H1 (cell line): ENCODE measurements at regions of chr6 and their contacts with region 1.

Region 1: GRCh38 chr6:152100183-152100618 is 292.7 kb downstream of the ESR1 start:
- DNase-seq: no peak
- H3K4me3 ChIP-seq: no peak overlapping the region
- H3K27ac ChIP-seq: no peak overlapping the region
- H3K4me1 ChIP-seq: peaks cover 0 to 3% (median 0%) of the 10 kb centered on the region in 4 experiments; a peak in 1 of 7 replicates
- H3K27me3 ChIP-seq: no peaks in the 10 kb centered on the region
- CTCF ChIP-seq: no peak
- EP300 ChIP-seq: no peak
- POLR2A ChIP-seq: no peak
- RAD21 ChIP-seq: no peak

Region 2: GRCh38 chr6:152110886-152111820 is 11.0 kb after region 1 on chr6:
- CTCF ChIA-PET with region 1: interaction called, 26 read pairs
- POLR2A ChIA-PET with region 1: no interaction called
- DNase-seq: no peak
- H3K4me3 ChIP-seq: no peak overlapping the region
- H3K27ac ChIP-seq: no peak overlapping the region
- H3K4me1 ChIP-seq: no peaks in the 10 kb centered on the region
- H3K27me3 ChIP-seq: no peaks in the 10 kb centered on the region
- CTCF ChIP-seq: no peak
- EP300 ChIP-seq: no peak
- POLR2A ChIP-seq: no peak
- RAD21 ChIP-seq: 0 out of 4 replicates have a peak, but pooled peaks of 1 of the 2 experiments have one; percentile 2

Region 3: DNA sequence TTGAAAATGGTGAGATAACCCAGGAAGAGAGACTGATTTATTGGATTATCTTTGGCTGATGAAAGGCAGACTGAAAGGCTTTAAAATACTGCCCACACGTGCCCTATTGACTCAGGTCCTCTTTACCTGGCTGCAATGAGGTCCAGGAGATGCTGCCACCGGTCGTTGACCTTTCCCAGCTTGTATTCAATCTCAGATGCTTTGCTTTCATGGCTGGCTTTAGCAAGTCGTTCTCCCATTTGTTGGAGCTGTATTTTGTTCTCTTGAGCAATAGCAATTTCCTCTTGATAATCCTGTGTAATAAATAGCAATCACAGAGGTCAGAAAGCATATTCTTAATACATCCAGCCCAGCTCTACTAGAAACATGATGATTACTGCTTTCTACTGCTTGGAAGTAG is 76.1 kb after region 1 on chr6:
- CTCF ChIA-PET with region 1: no interaction called
- POLR2A ChIA-PET with region 1: no interaction called
- DNase-seq: no peak
- H3K4me3 ChIP-seq: no peak overlapping the region
- H3K27ac ChIP-seq: no peak overlapping the region
- H3K4me1 ChIP-seq: peaks cover 0 to 2% (median 0%) of the 10 kb centered on the region in 4 experiments; a peak in 1 of 7 replicates
- H3K27me3 ChIP-seq: no peaks in the 10 kb centered on the region
- CTCF ChIP-seq: no peak
- EP300 ChIP-seq: no peak
- POLR2A ChIP-seq: no peak
- RAD21 ChIP-seq: no peak